ENCODE measurements at regions of chr7 and their contacts with region 1.

Region 1: GRCh38 chr7:135281363-135281949 is 47.8 kb downstream of the STRA8 start:
- DNase-seq: peak; percentile 29
- H3K4me3 ChIP-seq: no peak overlapping the region
- H3K27me3 ChIP-seq: no peaks in the 10 kb centered on the region; the same call in none of the 2 replicates
- CTCF ChIP-seq: peak; percentile 92

Region 2: DNA sequence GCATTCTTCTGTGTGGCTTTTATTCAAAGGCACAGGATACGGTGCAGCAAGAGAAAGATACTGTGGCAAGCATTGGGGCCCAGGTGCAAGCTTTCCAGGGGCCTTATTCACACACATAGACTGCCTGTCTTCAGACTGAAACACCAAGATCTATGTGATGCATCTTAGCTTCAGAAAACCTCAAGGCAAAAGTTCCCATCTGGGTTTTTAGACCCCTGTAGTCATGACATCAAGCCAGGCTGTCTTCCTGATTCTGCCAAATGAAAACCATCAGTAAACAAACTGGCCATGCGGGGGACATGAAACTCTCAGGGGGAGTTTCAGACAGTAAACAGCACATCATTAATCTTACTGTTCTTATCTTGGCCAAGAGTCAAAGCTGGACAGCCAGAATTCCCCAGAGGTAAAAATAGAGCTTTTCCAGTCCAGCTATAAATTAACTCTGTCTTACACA is 285.3 kb before region 1 on chr7:
- CTCF ChIA-PET with region 1: no interaction called
- POLR2A ChIA-PET with region 1: no interaction called
- DNase-seq: no peak
- H3K4me3 ChIP-seq: no peak overlapping the region
- H3K27me3 ChIP-seq: no peaks in the 10 kb centered on the region
- CTCF ChIP-seq: no peak

Region 3: DNA sequence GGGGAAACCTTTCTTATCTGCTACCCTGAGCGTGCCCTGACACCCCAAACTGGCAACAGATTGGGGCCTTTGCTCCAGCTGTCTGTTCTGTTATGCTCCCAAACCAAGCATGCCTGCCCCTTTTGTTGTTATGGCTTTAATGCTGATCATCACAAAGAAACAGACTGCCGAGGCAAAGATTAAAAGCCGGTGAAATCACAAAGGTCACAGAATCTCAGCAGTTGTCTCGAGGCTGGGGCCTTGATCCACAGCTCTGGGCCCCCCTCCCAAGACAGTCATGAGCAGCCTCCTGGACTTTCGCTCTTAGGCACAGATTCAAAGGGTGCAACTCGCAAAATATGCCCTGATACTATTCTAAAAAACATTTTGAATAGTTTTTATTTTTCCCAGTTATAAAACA is 17.8 kb after region 1 on chr7:
- CTCF ChIA-PET with region 1: interaction called, 12 read pairs
- POLR2A ChIA-PET with region 1: no interaction called
- DNase-seq: no peak
- H3K4me3 ChIP-seq: no peak overlapping the region
- H3K27me3 ChIP-seq: peaks cover 2% of the 10 kb centered on the region; the same call in 1 of the 2 replicates
- CTCF ChIP-seq: no peak

Region 4: DNA sequence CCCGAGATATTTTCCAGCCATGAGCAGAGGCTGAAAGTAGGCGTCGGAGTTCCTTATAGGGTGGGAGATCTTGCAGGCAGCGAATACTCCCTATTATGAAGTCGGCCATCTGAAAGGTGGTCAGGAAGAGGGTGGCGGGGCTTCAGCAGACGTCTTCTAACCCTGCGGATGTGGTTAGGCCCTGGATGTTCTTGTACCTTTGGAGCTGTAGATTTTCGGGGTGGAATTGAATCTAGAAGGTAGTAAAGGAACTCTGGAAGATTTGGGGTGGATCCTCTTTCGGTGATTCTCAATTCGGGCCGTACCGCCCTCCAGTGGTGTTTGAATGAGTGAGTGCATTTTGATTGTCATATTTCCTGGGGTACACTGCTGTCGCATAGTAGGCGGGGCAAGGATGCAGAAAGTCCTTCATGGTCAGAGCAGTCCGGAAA is 276.9 kb after region 1 on chr7:
- CTCF ChIA-PET with region 1: interaction called, 16 read pairs
- POLR2A ChIA-PET with region 1: no interaction called
- DNase-seq: peak; percentile 6
- H3K4me3 ChIP-seq: peak overlapping the region; percentile 93
- H3K27me3 ChIP-seq: no peaks in the 10 kb centered on the region
- CTCF ChIP-seq: peak; percentile 66

Measured in BJ (cell line).